Activated CD4-positive, alpha-beta T cell treated with anti-CD3 and anti-CD28 coated beads for 36 hours (primary cell): ENCODE measurements at regions of chr1 and their contacts with region 1.

Region 1: GRCh38 chr1:156282479-156283222 is at the start of gene SMG5:
- DNase-seq: peak; percentile 98
- ATAC-seq: peak; percentile 92
- H3K4me3 Mint-ChIP-seq: peak within 1 kb of the TSS; percentile 96
- H3K27ac Mint-ChIP-seq: peak within 1 kb of the TSS; percentile 92
- H3K4me1 Mint-ChIP-seq: peaks cover 29% of the 10 kb centered on the region
- H3K27me3 Mint-ChIP-seq: no peaks in the 10 kb centered on the region
- total RNA-seq, gene SMG5: 61.7 to 64.6 TPM

Region 2: DNA sequence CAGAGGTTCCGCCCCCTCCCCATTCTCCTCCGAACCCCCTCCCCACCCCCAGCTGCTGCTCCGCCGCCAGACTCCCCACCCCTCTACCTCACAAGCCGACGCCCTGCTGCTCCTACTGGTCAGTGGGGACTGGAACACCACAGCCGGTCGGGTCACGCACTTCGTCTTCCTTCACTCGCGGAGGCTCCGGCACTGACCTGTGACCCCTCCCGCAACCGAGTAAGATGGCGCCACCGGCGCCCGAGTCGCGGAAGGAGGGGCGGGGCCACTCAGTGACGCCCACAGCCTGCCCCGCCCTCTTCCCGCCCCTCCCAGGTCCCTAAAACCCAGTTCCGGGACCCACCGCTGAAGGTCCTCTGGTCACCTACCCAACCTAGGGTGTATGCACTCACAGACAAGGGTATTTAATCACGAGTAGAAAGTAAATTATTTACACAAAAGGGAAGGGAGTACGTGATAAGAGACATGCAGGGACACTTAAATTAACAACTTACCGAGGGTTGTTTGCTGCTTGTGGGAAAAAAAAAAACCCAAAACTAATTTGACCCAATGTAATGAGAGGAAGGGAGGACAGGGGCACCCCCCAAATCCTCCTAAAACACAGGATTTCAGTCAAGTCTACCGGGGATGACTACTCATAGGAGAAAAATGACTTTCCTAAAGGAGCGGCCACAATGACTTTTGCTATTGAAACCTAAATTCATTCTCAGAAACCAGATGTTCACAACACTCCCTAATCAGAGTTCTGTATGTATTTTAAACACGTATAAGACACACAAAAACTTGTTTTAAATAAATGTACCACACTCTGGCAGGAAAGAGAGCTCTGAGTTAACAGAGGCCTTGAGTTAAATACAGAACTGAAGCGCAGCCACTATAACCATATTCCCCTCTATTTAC is 371.2 kb before region 1 on chr1 and contains the start of gene RIT1:
- CTCF ChIA-PET with region 1: no interaction called
- POLR2A ChIA-PET with region 1: no interaction called
- intact Hi-C with region 1: loop called in 1 of 2 experiments (anchors 1 kb)
- DNase-seq: peak; percentile 93
- ATAC-seq: peak; percentile 85
- H3K4me3 Mint-ChIP-seq: peak within 1 kb of the TSS; percentile 85
- H3K27ac Mint-ChIP-seq: peak within 1 kb of the TSS; percentile 92
- H3K4me1 Mint-ChIP-seq: peaks cover 19% of the 10 kb centered on the region
- H3K27me3 Mint-ChIP-seq: no peaks in the 10 kb centered on the region
- total RNA-seq, gene RIT1: 20.3 to 23.0 TPM

Region 3: DNA sequence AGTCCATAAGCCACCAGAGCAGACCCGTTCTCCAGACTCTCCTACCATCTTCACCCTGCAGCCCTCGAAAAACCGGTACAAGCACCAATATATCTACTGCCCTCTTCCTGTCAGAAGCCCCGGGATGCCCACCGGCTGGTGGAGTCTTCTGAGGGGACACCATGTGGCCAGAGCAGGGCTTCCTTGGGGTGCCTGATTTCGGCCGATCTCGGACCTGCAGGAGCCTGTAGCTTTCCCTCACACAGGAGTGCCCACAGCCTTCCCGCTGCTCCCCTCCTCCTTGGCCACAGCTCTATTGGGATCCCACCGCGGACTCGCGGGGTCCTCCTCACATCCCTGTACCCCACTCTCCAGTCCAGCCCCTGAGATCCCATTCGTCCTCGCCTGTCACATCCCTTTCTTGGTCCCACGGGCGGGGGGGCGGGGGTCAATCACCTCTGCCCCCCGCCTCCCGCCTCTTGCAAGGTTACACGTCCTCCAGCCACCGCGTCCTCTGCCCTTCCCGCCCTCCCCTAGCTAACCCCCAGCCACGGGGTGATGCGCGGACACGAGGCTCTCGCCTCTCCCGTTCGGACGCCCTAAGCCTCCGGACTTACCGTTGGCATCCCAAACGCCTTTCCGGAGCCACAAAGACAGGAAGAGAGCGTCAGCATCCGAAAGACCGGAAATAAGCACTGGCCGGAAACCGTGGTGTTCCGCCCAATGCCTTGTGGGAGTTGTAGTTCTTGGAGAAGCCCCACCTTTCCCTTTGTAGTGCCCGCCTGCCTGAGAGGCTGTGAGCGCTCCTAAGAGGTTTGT is 262.2 kb before region 1 on chr1 and contains the start of gene SSR2:
- CTCF ChIA-PET with region 1: no interaction called
- POLR2A ChIA-PET with region 1: no interaction called
- intact Hi-C with region 1: loop called in 1 of 2 experiments (anchors 1 kb)
- DNase-seq: peak; percentile 92
- ATAC-seq: peak; percentile 100
- H3K4me3 Mint-ChIP-seq: peak within 1 kb of the TSS; percentile 94
- H3K27ac Mint-ChIP-seq: peak within 1 kb of the TSS; percentile 96
- H3K4me1 Mint-ChIP-seq: peaks cover 20% of the 10 kb centered on the region
- H3K27me3 Mint-ChIP-seq: peaks cover 4% of the 10 kb centered on the region
- total RNA-seq, gene SSR2: 143 to 197 TPM

Region 4: DNA sequence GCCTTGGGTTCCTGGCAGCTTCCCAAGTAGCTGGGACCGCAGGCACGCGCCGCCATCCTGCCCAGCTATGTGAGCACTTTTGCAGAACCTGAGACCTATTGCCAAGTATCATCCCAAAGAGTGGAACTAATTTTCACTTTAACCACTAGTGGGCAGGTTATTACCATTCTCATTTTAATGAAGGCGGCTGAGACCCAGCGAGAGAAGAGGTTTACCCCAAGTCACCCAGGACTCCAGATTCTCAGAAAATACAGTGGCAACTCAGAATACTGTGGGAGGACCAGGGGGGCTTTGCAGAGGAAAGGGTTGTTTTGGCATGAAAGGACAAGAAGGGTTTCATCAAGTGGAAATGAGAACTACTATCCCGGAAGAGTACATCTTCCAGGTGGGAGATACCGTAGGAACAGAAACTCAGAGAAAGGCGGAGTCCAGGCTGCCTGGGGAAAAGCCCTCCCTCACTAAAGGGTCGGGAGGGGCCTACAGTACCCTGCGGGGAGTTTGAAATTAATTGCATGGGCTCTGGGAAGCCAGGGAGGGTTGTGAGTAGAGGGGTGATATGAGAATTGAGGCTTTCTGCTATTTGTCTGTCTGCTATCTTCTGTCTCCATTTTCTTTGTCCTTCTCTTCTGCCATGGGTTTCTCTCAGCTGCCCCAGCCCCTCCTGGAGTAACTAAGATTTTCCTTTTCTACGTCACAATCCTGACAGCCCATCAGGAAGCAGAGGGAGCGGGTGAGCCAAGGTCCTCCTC is 136.5 kb before region 1 on chr1:
- CTCF ChIA-PET with region 1: interaction called, 9 read pairs
- POLR2A ChIA-PET with region 1: interaction called, 3 read pairs
- intact Hi-C with region 1: loop called in 1 of 2 experiments (anchors 1 kb)
- DNase-seq: peak; percentile 67
- ATAC-seq: peak; percentile 82
- H3K4me3 Mint-ChIP-seq: peak overlapping the region; percentile 37
- H3K27ac Mint-ChIP-seq: peak overlapping the region; percentile 85
- H3K4me1 Mint-ChIP-seq: peaks cover 46% of the 10 kb centered on the region
- H3K27me3 Mint-ChIP-seq: no peaks in the 10 kb centered on the region

Region 5: DNA sequence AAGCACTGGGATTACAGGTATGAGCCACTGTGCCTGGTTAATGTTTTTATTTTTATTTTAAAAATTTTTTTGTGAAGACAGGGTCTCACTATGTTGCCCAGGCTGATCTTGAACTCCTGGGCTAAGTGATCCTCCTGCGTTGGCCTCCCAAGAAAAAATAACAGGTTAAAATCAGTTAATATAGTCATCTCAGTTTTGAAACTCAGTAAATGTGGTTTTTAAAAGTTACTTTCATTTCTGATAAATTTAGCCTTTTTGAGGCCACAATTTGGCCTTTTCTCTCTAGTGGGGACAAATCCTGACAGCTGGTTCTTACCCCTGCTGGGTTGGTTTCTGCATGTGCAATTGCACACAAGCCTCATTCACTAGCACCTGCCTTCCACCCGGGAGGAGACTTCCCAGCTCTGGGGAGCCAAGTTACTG is 56.5 kb before region 1 on chr1:
- CTCF ChIA-PET with region 1: interaction called, 14 read pairs
- POLR2A ChIA-PET with region 1: no interaction called
- intact Hi-C with region 1: loop called in 1 of 2 experiments (anchors 5 kb)
- DNase-seq: no peak
- ATAC-seq: no peak
- H3K4me3 Mint-ChIP-seq: no peak overlapping the region
- H3K27ac Mint-ChIP-seq: peak overlapping the region; percentile 85
- H3K4me1 Mint-ChIP-seq: peaks cover 47% of the 10 kb centered on the region
- H3K27me3 Mint-ChIP-seq: no peaks in the 10 kb centered on the region

Region 6: DNA sequence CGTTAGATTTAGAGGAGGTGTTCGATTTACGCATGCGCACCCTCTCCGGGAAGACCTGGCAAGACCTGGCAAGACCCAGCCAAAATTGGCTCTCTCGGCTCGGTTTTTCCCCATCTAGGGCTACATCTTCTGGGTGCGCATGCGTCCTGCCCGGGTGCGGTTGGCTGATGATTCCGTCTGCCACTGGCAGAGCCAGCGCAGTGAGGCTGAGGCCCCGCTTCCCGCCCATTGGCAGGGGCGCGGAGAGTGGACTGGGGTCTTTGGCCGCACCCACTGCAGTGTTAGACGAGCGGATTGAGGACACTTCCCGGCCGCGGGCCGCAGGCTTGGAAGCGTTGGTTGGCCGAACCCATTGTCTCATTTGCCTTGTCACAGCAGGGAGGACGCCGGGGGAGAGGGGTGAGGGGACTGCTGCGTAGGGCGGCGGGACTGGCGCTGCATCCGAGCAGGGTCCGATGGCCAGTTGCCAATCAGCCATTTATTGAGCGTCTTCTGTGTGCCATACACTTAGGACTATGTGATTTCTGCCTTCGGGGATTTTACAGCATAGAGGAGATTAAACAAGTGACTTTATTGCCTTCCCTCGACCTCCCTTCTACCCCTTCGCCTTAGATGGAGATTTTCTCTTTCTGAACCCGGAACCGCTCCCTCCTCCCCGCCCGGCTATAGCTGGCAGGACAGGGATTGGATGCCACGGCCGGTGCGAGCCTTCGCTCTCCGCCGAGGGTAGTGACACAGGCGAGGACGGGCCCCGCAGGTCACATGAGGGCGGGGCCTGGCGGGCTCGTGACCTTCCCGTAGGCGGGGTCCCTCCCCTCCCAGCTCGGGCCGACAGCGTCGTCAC is 174.2 kb after region 1 on chr1:
- CTCF ChIA-PET with region 1: no interaction called
- POLR2A ChIA-PET with region 1: no interaction called
- intact Hi-C with region 1: loop called in 1 of 2 experiments (anchors 1 kb)
- DNase-seq: peak; percentile 99
- ATAC-seq: peak; percentile 88
- H3K4me3 Mint-ChIP-seq: peak overlapping the region; percentile 79
- H3K27ac Mint-ChIP-seq: peak overlapping the region; percentile 98
- H3K4me1 Mint-ChIP-seq: peaks cover 22% of the 10 kb centered on the region
- H3K27me3 Mint-ChIP-seq: no peaks in the 10 kb centered on the region